ENCODE measurements at regions of chr15 and their contacts with region 1.

Region 1: GRCh38 chr15:51162865-51163762 is 68.4 kb upstream of the TNFAIP8L3 start:
- DNase-seq: peak; percentile 76
- H3K4me3 Mint-ChIP-seq: no peak overlapping the region
- H3K27ac Mint-ChIP-seq: no peak overlapping the region
- H3K4me1 Mint-ChIP-seq: peaks cover 5% of the 10 kb centered on the region
- H3K27me3 Mint-ChIP-seq: peaks cover 4% of the 10 kb centered on the region

Region 2: GRCh38 chr15:50758762-50759161 is 404.4 kb before region 1 on chr15:
- CTCF ChIA-PET with region 1: no interaction called
- intact Hi-C with region 1: no loop called
- DNase-seq: no peak
- H3K4me3 Mint-ChIP-seq: no peak overlapping the region
- H3K27ac Mint-ChIP-seq: no peak overlapping the region
- H3K4me1 Mint-ChIP-seq: peaks cover 61% of the 10 kb centered on the region
- H3K27me3 Mint-ChIP-seq: no peaks in the 10 kb centered on the region

Region 3: DNA sequence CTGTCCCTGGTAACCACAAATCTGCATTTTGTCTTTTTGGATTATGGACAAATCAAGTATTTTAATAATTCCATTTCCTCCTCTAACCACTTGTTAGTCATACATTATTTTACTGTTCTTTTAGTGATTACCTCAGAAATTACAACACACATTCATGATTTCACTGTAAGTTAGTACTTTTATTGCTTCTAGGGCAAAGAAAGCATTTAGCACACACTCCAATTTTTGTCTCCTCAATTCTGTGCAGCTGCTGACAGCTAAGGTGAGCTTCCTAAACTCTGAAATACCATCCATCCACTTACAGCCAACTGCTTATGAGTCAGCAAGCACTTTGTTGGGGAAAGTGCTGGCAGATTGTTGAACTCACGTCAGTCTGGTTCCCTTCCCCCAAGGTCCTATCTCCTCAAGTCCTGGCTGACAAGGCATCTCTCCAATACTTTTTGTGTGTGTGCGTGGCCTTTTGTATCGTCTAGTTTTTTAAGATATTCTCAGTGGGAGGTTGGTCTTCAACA is 19.0 kb before region 1 on chr15:
- CTCF ChIA-PET with region 1: interaction called, 10 read pairs
- intact Hi-C with region 1: no loop called
- DNase-seq: no peak
- H3K4me3 Mint-ChIP-seq: no peak overlapping the region
- H3K27ac Mint-ChIP-seq: no peak overlapping the region
- H3K4me1 Mint-ChIP-seq: no peaks in the 10 kb centered on the region
- H3K27me3 Mint-ChIP-seq: peaks cover 11% of the 10 kb centered on the region

Region 4: DNA sequence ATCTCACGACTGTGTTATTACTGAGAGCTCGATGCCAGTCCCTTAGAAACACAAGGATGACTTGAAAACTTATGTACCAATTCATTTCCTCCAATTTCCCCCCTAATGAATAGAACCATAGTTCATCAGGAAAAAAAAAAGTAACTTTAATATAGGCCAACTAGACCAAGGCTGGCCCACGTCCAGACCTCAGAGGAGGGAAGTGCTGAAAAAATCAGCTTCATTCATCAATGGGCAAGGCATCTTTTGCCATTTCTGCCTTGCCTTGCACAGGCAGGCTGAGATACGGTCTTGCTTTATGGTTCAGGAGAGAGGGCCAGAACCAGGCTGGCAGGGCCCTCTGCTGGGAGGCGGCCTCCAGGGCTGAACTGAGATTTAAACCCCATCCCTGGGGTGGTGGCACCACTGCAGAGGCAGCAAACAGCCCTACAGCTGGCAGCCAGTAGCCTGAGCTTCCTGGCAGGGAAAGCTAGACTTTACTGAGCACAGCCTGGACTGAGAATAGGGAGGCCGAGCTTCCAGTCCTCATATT is 35.7 kb after region 1 on chr15:
- CTCF ChIA-PET with region 1: interaction called, 46 read pairs
- intact Hi-C with region 1: no loop called
- DNase-seq: no peak
- H3K4me3 Mint-ChIP-seq: no peak overlapping the region
- H3K27ac Mint-ChIP-seq: no peak overlapping the region
- H3K4me1 Mint-ChIP-seq: no peaks in the 10 kb centered on the region
- H3K27me3 Mint-ChIP-seq: peaks cover 10% of the 10 kb centered on the region

Region 5: DNA sequence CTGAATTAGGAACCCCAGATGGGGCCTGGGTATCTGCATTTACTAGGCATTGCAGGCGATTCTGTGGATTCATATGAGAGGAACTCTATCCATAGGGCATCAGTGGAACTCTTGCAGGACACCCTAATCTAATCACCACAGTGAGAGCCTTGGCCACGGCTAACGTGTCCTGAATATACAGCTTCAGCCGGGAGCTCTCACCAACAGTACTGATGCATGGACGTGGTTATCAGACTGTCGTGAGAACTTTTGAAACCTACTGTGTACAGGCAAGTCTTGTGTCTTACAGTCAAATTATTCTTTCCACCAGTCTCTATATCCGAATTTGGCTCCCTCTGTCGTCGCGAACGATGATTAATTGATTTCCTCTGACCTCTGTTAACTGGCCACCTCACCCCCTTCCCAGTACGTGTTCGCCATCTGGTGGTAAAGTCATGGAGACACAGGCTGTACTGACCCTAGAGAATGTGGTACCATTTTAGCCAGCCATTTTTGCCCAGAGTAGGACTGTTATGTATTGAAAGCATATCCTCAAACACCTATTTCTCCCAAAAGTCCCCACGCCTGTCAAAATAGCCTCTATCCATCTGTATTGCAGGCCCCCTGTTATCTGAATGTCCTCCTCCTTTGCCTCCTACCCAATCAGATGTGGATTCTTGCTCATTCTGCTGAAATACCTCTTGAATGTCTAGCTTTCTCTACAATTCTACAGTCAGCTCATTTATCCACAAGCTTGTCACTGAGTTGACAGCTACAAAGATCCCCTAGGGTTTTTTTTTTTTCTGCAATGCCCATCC is 218.1 kb after region 1 on chr15:
- CTCF ChIA-PET with region 1: interaction called, 24 read pairs
- intact Hi-C with region 1: loop called (anchors 1 kb)
- DNase-seq: peak; percentile 58
- H3K4me3 Mint-ChIP-seq: no peak overlapping the region
- H3K27ac Mint-ChIP-seq: no peak overlapping the region
- H3K4me1 Mint-ChIP-seq: no peaks in the 10 kb centered on the region
- H3K27me3 Mint-ChIP-seq: peaks cover 18% of the 10 kb centered on the region

Region 6: GRCh38 chr15:51499379-51499976 is 336.4 kb after region 1 on chr15:
- CTCF ChIA-PET with region 1: interaction called, 7 read pairs
- intact Hi-C with region 1: loop called (anchors 1 kb)
- DNase-seq: no peak
- H3K4me3 Mint-ChIP-seq: no peak overlapping the region
- H3K27ac Mint-ChIP-seq: no peak overlapping the region
- H3K4me1 Mint-ChIP-seq: no peaks in the 10 kb centered on the region
- H3K27me3 Mint-ChIP-seq: no peaks in the 10 kb centered on the region

Measured in activated naive CD4-positive, alpha-beta T cell treated with anti-CD3 and anti-CD28 coated beads for 36 hours (primary cell).